Endothelial cell of umbilical vein (primary cell): ENCODE measurements at regions of chr3 and their contacts with region 1.

Region 1: DNA sequence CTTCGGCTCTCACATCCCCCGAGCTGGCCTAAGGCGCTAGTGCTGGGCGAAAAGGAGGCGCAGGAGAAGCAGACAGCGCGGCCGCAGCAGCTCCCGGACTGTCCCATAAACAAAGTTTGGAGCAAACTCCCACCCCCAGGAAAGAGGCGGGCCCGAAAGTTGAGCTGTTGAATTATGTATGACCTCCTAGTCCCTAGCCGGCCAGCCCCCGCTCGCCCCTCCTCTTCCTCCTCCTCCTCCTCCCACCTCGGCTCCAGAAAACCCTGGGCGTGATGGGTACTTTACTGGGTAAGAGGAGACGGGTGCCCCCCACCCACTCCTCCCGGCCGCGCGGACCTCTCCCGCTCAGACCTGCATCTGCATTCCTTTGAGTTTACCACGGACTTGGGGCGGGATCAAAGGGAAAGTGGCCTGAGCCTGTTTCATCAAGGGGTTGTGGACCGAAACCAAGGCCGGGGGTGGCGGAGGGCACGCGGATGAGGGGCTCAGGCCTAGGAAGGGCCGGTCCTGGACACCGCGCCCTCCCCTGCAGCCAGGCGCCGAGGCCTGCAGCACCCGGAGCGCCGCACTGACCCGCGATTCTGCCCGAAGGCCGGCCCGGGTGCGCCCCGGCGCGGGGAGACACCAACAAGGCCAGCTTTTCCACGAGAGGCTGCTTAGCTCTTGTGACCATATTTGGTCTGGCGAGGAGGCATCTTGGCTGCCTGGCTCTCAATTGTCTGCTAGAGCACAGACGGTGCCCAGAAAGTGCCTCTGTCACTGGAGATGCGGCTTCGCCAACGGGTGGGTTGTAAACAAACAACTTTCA is at the start of gene WWTR1:
- DNase-seq: peak; percentile 97
- H3K4me3 ChIP-seq: peak within 1 kb of the TSS; percentile 87 to 99 (median 98)
- H3K27ac ChIP-seq: peak within 1 kb of the TSS; percentile 85
- H3K4me1 ChIP-seq: peaks cover 39% of the 10 kb centered on the region
- H3K27me3 ChIP-seq: no peaks in the 10 kb centered on the region
- CTCF ChIP-seq: no peak
- POLR2A ChIP-seq: peak; percentile 99
- total RNA-seq, gene WWTR1: 210 and 262 TPM in 2 replicates

Region 2: GRCh38 chr3:149366941-149367840 is 290.9 kb before region 1 on chr3:
- CTCF ChIA-PET with region 1: no interaction called
- POLR2A ChIA-PET with region 1: no interaction called
- dilution Hi-C with region 1: no loop called
- intact Hi-C with region 1: loop called (anchors 5 kb)
- DNase-seq: peak; percentile 90
- H3K4me3 ChIP-seq: no peak overlapping the region
- H3K27ac ChIP-seq: peak overlapping the region; percentile 39
- H3K4me1 ChIP-seq: peaks cover 52% of the 10 kb centered on the region
- H3K27me3 ChIP-seq: no peaks in the 10 kb centered on the region
- CTCF ChIP-seq: no peak
- POLR2A ChIP-seq: peak; percentile 61

Region 3: DNA sequence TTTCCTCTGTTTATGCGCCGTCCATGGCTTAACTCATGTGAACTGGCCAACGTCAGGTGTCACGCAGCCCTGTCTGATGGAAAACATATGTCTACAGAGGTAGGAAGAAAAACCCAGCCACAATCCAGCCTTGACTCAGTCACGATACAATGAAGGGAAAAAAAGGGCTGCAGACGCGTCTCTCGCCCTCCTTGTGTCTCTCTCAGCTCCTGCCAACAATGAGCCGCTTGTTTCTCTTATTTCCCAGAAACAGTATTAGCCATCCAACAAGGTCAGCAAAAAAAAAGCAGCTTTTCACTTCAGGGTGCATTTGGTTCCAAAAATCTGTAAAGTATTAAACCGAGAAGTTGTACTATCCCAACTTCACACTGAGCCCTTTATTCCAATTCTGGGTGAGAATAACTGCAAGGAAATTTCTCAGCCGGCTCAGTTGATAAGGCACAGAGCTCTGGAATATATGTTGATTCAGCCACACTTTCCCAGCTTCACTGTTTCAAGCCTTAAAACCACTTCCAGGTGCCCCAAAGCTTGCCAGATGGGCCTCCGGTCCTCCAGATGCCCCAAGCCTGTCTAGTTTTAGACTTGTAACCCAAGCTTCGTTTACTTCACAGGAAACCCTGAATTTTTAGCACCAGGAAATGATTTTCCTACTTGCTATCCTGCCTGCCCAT is 104.2 kb before region 1 on chr3:
- CTCF ChIA-PET with region 1: interaction called, 6 read pairs
- POLR2A ChIA-PET with region 1: interaction called, 7 read pairs
- dilution Hi-C with region 1: no loop called
- intact Hi-C with region 1: loop called (anchors 1 kb)
- DNase-seq: peak; percentile 85
- H3K4me3 ChIP-seq: peak overlapping the region in 1 of 3 experiments; percentile 13
- H3K27ac ChIP-seq: peak overlapping the region; percentile 88
- H3K4me1 ChIP-seq: peaks cover 46% of the 10 kb centered on the region
- H3K27me3 ChIP-seq: no peaks in the 10 kb centered on the region
- CTCF ChIP-seq: no peak
- POLR2A ChIP-seq: no peak

Region 4: DNA sequence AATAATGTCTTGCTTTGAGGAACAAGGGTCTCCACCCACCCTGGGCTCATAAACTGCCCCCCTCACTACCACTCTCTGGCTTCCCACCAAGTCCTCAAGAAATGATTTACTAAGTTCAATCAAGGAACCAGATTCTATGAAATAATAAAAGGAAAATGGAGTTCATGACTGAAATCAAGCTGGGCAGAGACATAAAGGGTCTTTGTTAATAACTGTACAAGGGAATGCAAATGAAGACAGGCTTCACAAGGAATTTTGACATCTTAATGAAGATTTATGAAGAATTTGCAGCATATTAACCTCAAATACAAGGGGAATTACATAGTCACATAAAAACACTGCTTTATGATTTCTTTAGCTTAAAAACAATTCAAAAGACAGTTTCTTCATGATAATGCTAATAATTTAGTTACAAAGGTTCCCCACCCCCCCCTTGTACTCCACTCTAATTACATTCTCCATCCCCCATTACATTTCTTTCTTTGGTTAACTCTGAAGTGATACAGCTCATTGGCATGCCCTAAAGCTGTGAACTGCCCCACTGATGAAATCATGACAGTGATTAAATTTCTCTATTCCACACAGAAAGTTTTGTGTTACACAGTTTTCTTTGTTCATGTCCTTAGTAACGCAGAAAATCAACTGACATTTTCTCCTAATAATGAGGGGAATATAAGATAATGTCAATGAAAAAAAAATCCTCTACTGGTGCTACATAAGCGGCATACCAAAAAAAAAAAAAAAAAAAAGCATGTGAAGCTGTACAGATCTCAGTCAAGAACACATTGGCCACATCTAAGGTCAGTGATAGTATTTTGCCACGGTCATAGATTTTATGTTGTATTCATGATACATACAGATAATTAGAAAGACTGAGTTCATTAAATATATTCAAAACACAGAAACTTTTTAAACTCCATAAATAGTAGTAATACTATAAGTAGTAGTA is 54.7 kb before region 1 on chr3:
- CTCF ChIA-PET with region 1: interaction called, 5 read pairs
- POLR2A ChIA-PET with region 1: interaction called, 4 read pairs
- dilution Hi-C with region 1: no loop called
- intact Hi-C with region 1: loop called (anchors 1 kb)
- DNase-seq: no peak
- H3K4me3 ChIP-seq: no peak overlapping the region
- H3K27ac ChIP-seq: peak overlapping the region; percentile 83
- H3K4me1 ChIP-seq: peaks cover 93% of the 10 kb centered on the region
- H3K27me3 ChIP-seq: no peaks in the 10 kb centered on the region
- CTCF ChIP-seq: no peak
- POLR2A ChIP-seq: no peak

Region 5: GRCh38 chr3:149621218-149622005 is 36.7 kb before region 1 on chr3:
- CTCF ChIA-PET with region 1: interaction called, 4 read pairs
- POLR2A ChIA-PET with region 1: interaction called, 10 read pairs
- dilution Hi-C with region 1: no loop called
- intact Hi-C with region 1: no loop called
- DNase-seq: peak; percentile 90
- H3K4me3 ChIP-seq: peak overlapping the region in 1 of 3 experiments; percentile 13
- H3K27ac ChIP-seq: peak overlapping the region; percentile 99
- H3K4me1 ChIP-seq: peaks cover 75% of the 10 kb centered on the region
- H3K27me3 ChIP-seq: no peaks in the 10 kb centered on the region
- CTCF ChIP-seq: no peak
- POLR2A ChIP-seq: peak; percentile 47

Region 6: DNA sequence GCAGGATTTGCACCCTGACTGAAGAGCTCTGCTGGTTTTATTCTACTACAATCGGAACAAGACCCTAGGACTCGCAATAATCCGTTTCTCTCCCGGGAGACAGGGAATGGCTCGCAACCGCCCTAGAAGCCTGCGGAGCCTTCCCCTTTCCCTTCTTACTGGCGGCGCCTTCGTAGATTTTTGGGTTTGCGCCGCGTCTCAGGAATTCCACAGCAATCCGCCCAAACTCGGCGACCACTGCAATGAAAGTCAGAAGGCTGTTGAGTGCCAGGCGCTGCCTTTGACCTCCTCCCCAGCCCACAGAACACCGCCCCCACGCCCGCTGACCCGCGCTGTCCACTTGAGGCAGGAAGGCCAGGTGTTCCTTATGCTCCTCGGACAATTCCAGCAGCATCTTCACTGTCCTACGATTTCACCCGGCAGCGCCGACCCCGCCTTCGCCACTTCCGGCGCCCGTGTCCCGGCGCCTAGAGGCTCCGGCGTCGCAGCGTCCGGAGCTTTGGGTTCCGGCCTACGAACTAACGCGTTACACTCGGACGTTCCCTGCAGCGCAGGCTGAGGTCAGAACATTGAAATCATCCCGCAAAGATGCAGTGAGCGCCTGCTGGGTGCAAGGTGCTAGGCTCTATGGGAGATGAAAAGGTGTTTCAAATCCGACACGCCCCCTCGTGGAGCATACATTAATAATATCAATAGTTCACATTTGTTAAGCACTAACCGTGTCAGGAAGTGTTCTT is 94.1 kb after region 1 on chr3 and contains the start of gene COMMD2:
- CTCF ChIA-PET with region 1: interaction called, 5 read pairs
- POLR2A ChIA-PET with region 1: interaction called, 3 read pairs
- dilution Hi-C with region 1: no loop called
- intact Hi-C with region 1: loop called (anchors 2 kb)
- DNase-seq: peak; percentile 83
- H3K4me3 ChIP-seq: peak within 1 kb of the TSS; percentile 74 to 94 (median 91)
- H3K27ac ChIP-seq: peak within 1 kb of the TSS; percentile 33
- H3K4me1 ChIP-seq: peaks cover 15% of the 10 kb centered on the region
- H3K27me3 ChIP-seq: no peaks in the 10 kb centered on the region
- CTCF ChIP-seq: peak in 1 of 2 donors; percentile 17
- POLR2A ChIP-seq: peak; percentile 86
- total RNA-seq, gene COMMD2: 42.9 and 51.0 TPM in 2 replicates

Region 7: GRCh38 chr3:149832086-149832485 is 174.0 kb after region 1 on chr3:
- CTCF ChIA-PET with region 1: no interaction called
- POLR2A ChIA-PET with region 1: no interaction called
- dilution Hi-C with region 1: no loop called
- intact Hi-C with region 1: no loop called
- DNase-seq: no peak
- H3K4me3 ChIP-seq: no peak overlapping the region
- H3K27ac ChIP-seq: no peak overlapping the region
- H3K4me1 ChIP-seq: no peaks in the 10 kb centered on the region
- H3K27me3 ChIP-seq: no peaks in the 10 kb centered on the region
- CTCF ChIP-seq: no peak
- POLR2A ChIP-seq: no peak